ENCODE measurements at regions of chr2 and their contacts with region 1.

Region 1: DNA sequence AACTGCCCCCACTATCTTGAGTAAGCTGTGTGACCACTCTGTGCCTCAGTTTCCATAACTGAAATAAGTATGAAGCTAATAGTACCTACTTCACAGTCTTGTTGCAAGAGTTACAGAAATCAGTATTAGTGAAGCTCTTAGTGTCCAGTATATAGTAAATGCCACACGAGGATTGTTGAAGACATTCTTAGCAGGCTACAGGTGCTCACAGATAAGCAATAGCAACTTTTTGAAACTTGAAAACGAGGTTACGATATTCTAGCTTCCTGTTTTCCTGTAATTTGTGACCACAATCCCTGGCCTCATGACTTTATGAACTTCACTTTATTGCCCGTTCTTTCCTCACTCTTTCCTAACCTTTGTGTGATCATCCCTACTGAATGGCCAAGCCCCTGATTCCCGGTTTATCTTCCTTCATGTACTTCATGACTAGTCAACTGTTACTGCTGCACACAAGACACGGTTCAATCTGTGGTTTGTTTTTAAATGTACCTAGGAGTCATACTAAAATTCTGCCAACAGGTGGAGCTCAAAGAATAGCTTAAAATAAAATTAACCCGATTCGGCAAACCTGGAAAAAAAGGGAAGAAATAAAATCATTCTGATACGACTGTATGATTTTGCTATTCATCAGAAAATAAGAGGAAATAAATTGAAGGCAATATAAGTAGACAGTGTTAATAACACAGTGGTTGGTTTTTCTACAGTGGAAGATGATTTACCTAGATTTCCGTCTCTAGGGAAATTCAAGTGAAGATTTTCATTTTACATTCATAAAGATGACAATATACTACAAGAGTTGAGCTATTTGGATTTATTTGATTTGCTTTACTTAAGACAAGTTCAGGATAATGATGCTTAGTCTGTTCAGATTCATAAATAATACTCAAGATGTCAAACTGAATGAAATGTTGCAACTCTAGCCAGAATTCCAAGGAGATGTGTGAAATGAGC is 38.1 kb upstream of the STAT1 start:
- DNase-seq: peak in 1 of 2 experiments; percentile 72
- ATAC-seq: peak; percentile 22 to 39; a peak in 3 of 6 replicates
- H3K4me3 ChIP-seq: no peak overlapping the region
- H3K27ac ChIP-seq: peak overlapping the region; percentile 92 to 98
- H3K4me1 ChIP-seq: peaks cover 55% of the 10 kb centered on the region
- CTCF ChIP-seq: peak; percentile 86
- EP300 ChIP-seq: no peak
- POLR2A ChIP-seq: no peak
- RAD21 ChIP-seq: peak; percentile 85 to 90

Region 2: GRCh38 chr2:191020221-191020741 is 31.8 kb before region 1 on chr2:
- CTCF ChIA-PET with region 1: interaction called, 7 read pairs
- POLR2A ChIA-PET with region 1: interaction called, 24 read pairs
- DNase-seq: peak; percentile 95 to 96
- ATAC-seq: peak; percentile 95 to 97
- H3K4me3 ChIP-seq: peak overlapping the region; percentile 71
- H3K27ac ChIP-seq: peak overlapping the region; percentile 95 to 99
- H3K4me1 ChIP-seq: peaks cover 34% of the 10 kb centered on the region
- CTCF ChIP-seq: no peak
- EP300 ChIP-seq: peak in 1 of 2 experiments; percentile 55; a peak in 1 of 5 replicates
- POLR2A ChIP-seq: peak; percentile 90
- RAD21 ChIP-seq: peak; percentile 26 to 47; a peak in 4 of 5 replicates

Region 3: GRCh38 chr2:191083540-191083939 is 31.4 kb after region 1 on chr2:
- CTCF ChIA-PET with region 1: no interaction called
- POLR2A ChIA-PET with region 1: no interaction called
- DNase-seq: no peak
- ATAC-seq: no peak
- H3K4me3 ChIP-seq: no peak overlapping the region
- H3K27ac ChIP-seq: no peak overlapping the region
- H3K4me1 ChIP-seq: no peaks in the 10 kb centered on the region
- CTCF ChIP-seq: no peak
- EP300 ChIP-seq: no peak
- POLR2A ChIP-seq: no peak
- RAD21 ChIP-seq: no peak

Region 4: GRCh38 chr2:191150600-191151330 is 98.7 kb after region 1 on chr2 and contains the start of gene STAT4:
- CTCF ChIA-PET with region 1: interaction called, 97 read pairs
- POLR2A ChIA-PET with region 1: interaction called, 5 read pairs
- DNase-seq: peak; percentile 43 to 67
- ATAC-seq: peak; percentile 86 to 91
- H3K4me3 ChIP-seq: peak within 1 kb of the TSS; percentile 75
- H3K27ac ChIP-seq: peak within 1 kb of the TSS; percentile 65 to 84
- H3K4me1 ChIP-seq: peaks cover 29% of the 10 kb centered on the region; the same call in 2 of the 3 replicates
- CTCF ChIP-seq: no peak
- EP300 ChIP-seq: no peak
- POLR2A ChIP-seq: 0 out of 2 replicates have a peak, but pooled peaks have one; percentile 5
- RAD21 ChIP-seq: no peak
- polyA plus RNA-seq, gene STAT4: 32.4 and 34.4 TPM in 2 replicates

Region 5: DNA sequence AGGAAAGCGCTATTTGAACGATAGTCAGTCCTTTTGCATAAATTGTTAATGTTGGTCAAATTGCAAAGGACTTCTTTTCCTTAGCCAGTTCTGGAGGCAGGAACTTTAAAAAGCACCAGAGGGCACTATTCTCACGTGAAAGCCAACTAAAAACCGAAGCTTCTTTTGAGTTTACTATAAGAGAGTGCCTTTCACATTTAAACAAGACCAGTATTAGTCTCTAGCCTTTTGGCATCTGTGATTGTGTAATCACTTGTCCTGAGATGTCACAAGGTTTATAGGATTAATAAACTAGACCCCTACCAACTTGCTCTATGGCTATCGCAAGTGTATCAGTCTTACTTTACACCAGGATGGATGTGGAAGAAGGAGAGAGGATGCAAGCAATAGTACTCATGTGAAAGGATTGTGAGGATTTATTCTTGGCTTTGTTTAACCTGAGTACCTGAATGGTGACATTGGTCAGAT is 113.1 kb after region 1 on chr2:
- CTCF ChIA-PET with region 1: interaction called, 47 read pairs
- POLR2A ChIA-PET with region 1: interaction called, 4 read pairs
- DNase-seq: peak; percentile 42 to 65
- ATAC-seq: peak; percentile 65 to 81
- H3K4me3 ChIP-seq: no peak overlapping the region
- H3K27ac ChIP-seq: peak overlapping the region; percentile 85 to 95
- H3K4me1 ChIP-seq: peaks cover 51% of the 10 kb centered on the region
- CTCF ChIP-seq: peak; percentile 92
- EP300 ChIP-seq: no peak
- POLR2A ChIP-seq: no peak
- RAD21 ChIP-seq: peak; percentile 95 to 98

Region 6: DNA sequence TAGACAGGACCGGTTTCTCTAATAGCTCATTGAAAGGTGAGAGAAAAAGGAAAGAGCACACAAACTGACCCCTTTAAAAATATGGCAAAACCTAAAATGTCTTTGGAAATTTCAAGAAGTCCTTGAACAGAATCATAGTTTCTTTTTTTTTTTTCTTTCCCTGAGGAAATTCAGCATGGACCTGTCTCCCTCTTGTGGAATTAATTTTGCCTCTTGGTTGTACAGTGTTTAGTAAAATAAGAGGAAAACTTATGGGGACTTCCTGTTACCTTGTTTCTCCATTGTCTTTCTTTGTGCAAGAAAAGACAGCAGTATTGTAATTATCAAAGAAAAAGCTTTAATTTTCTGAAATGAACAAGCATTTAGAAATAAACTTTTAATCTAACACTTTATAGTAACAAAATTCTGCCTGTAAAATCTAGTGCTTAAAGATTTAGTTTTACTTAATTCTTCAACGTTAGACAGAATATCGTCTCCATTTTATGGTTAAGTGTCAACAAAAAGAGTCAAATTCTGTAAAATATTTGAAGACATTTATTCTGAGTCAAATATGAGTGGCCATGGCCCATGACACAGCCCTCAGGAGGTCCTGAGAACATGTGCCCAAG is 449.6 kb after region 1 on chr2:
- CTCF ChIA-PET with region 1: interaction called, 86 read pairs
- POLR2A ChIA-PET with region 1: no interaction called
- DNase-seq: peak; percentile 33 to 64
- ATAC-seq: peak; percentile 52 to 71; a peak in 3 of 6 replicates
- H3K4me3 ChIP-seq: no peak overlapping the region
- H3K27ac ChIP-seq: peak overlapping the region; percentile 37 to 83
- H3K4me1 ChIP-seq: peaks cover 32% of the 10 kb centered on the region
- CTCF ChIP-seq: peak; percentile 79
- EP300 ChIP-seq: no peak
- POLR2A ChIP-seq: no peak
- RAD21 ChIP-seq: peak; percentile 87 to 88

Region 7: DNA sequence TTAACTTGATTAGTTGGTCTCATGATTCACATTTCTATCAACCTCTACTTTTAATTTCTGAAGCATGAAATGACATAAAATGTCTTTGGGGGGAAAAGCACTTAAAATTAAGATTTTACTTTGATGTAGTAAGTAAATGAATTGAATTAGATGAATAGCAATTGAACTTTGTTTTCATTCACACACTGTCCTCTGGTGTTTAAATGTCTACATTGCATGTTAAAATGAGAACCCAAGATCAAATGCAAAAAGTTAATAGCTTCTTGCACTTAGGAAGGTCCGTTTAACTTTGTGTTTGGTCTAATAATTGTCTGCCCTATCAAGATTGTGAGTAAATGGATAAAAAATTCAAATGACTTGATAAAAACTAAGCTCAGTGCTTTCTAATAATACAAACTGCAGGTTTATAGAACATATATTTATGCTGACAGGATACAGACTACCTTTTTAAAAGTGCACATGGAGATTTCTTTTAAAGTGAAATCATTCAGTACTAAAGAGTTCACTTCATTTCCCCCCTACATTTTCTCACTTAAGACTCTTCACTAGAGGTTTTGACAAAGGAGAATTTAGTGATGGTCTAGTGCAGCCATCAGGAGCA is 469.6 kb after region 1 on chr2:
- CTCF ChIA-PET with region 1: interaction called, 50 read pairs
- POLR2A ChIA-PET with region 1: no interaction called
- DNase-seq: peak; percentile 41 to 51
- ATAC-seq: peak in 1 of 2 experiments; percentile 58; a peak in 2 of 6 replicates
- H3K4me3 ChIP-seq: no peak overlapping the region
- H3K27ac ChIP-seq: peak overlapping the region; percentile 28 to 31; a peak in 4 of 6 replicates
- H3K4me1 ChIP-seq: peaks cover 24% of the 10 kb centered on the region; the same call in 2 of the 3 replicates
- CTCF ChIP-seq: peak; percentile 94
- EP300 ChIP-seq: no peak
- POLR2A ChIP-seq: no peak
- RAD21 ChIP-seq: peak; percentile 91 to 95

Measured in A549 (cell line).